ENCODE measurements at regions of chr6 and their contacts with region 1.

Region 1: GRCh38 chr6:118876814-118877213 is 17.1 kb upstream of the ASF1A start:
- DNase-seq: peak; percentile 74
- ATAC-seq: peak; percentile 55
- H3K4me3 ChIP-seq: peak overlapping the region; percentile 55; the same call in 1 of the 2 replicates
- H3K27ac ChIP-seq: peak overlapping the region; percentile 98
- H3K4me1 ChIP-seq: peaks cover 31% of the 10 kb centered on the region
- H3K27me3 ChIP-seq: no peaks in the 10 kb centered on the region
- CTCF ChIP-seq: no peak

Region 2: DNA sequence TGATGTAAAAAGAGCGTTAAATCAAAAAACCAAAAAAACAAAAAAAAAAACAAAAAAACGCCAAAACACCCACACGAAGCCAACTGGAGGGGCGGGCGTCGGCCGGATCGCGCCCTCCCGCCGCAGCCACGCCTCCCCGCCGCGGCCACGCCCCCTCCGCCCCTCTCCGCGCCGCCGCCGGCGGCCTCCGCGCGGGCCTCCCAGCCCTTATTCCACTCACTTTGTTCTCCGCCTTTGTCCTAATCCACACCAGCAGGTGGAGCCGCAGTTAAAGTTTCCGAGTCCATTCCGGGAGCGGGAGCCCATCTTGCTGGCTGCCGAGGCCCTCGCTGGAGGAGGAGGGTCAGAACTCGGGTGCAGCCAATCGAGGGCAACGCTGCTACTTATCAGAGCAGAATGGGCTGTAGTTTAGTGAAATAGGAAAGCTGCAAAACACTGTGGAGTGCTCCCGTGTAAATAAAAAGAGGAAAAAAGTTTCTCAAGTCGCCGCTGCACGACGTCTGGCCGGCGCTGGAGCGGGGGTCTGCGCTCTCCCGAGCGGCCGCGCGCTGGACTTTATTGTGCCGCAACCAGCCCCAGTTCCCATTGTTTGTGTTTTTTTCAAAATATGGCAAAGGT is 17.1 kb after region 1 on chr6 and contains the start of gene ASF1A:
- CTCF ChIA-PET with region 1: interaction called, 3 read pairs
- POLR2A ChIA-PET with region 1: no interaction called
- intact Hi-C with region 1: loop called (anchors 2 kb)
- DNase-seq: peak; percentile 95
- ATAC-seq: peak; percentile 78
- H3K4me3 ChIP-seq: peak within 1 kb of the TSS; percentile 99
- H3K27ac ChIP-seq: peak within 1 kb of the TSS; percentile 86
- H3K4me1 ChIP-seq: peaks cover 29% of the 10 kb centered on the region
- H3K27me3 ChIP-seq: no peaks in the 10 kb centered on the region
- CTCF ChIP-seq: peak; percentile 60
- total RNA-seq, gene ASF1A: 24.6 and 25.0 TPM in 2 replicates

Region 3: DNA sequence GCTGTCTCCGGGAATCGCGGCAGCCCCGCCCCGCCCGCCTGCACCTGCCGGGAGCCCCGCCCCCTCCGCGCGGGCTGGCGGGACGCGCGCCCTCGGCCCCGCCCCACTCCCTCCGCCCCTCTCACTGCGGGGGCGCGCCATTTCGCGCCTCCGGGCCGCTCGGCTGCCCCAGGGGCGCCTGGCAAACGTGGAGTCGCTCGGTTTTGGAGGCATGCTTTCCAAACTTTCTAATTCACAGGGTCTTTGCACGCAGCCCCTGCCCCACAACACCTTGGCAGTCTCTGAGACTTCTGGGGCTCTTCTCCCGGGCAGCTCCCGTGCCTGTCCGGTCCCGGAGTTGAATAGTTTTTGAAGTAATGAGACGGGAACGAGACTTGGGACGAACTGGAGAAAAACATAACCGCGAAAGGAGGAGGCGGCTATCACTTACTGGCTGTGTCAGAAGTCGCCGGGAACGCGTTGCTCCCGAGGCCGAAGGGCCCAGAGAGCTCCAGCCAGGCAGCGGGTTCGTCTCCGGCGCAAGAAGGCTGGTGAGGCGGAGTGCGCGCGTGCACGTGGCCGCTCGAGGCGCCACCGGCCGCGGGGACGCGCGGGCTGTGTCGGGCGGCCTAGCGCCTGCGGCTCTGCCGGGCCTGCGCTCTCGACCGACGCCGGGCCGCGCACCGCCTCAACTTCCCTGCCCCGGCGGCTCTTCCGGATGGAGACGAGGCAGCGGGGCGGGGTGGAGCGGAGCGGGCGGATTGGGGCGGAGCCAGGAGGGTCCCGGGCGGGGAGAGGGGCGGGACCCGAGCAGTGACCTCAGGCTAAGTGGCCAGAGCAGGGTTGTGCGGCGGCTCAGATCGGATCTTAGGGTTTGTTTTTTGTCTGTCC is 57.9 kb after region 1 on chr6 and contains the start of gene MCM9:
- CTCF ChIA-PET with region 1: no interaction called
- POLR2A ChIA-PET with region 1: interaction called, 10 read pairs
- intact Hi-C with region 1: no loop called
- DNase-seq: peak; percentile 82
- ATAC-seq: peak; percentile 86
- H3K4me3 ChIP-seq: peak within 1 kb of the TSS; percentile 86
- H3K27ac ChIP-seq: peak within 1 kb of the TSS; percentile 53
- H3K4me1 ChIP-seq: peaks cover 32% of the 10 kb centered on the region
- H3K27me3 ChIP-seq: no peaks in the 10 kb centered on the region
- CTCF ChIP-seq: no peak
- total RNA-seq, gene MCM9: 5.3 and 5.8 TPM in 2 replicates

Measured in PC-3 (cell line).